MCF 10A (cell line): ENCODE measurements at regions of chr18 and their contacts with region 1.

Region 1: DNA sequence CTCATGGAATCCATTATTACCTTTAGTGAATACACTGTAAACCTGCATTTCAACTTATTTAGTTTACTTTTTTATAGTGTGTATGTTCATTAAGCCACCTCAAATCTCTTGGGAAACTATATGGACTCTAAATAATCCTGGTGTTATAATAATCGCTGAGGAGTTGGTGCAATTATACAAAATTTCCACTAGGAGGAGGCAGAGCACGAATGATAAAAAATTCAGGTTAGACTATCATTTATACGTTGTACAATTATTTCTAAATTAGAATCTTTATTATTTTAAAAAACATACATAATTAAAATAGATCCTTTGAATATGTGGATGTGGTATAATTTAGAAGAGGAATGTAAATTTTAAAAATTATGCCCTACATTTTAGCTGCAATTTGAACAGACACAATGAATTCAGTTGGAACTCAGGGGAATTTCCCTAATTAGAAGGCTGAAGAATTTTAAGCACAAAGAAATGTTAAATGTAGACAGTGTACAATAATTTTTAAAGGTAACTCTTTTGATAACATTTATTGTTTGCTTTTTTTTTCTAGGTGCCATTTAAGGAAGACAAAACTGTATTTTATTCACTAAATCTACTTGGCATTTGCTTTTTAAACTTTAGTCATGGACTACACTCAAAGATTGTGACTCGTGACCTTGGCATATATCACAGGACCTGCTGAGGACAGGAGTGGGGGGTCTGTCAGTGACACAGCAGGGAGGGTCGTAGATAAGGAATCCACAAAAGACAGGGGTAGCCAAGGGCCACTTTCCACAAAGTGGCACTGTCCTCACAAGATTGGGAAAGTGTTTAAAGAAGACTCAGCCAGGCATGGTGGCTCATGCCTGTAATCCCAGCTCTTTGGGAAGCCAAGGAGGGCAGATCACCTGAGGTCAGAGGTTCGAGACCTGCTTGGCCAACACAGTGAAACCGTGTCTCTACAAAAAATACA is 45.5 kb downstream of the RAB12 start:
- DNase-seq: peak; percentile 40
- H3K4me3 Mint-ChIP-seq: no peak overlapping the region
- H3K27ac Mint-ChIP-seq: no peak overlapping the region
- H3K4me1 Mint-ChIP-seq: peaks cover 10% of the 10 kb centered on the region
- H3K27me3 Mint-ChIP-seq: peaks cover 14% of the 10 kb centered on the region
- CTCF ChIP-seq: peak; percentile 71

Region 2: GRCh38 chr18:8643326-8643878 is 11.4 kb before region 1 on chr18:
- CTCF ChIA-PET with region 1: interaction called, 14 read pairs
- POLR2A ChIA-PET with region 1: interaction called, 3 read pairs
- intact Hi-C with region 1: no loop called
- DNase-seq: no peak
- H3K4me3 Mint-ChIP-seq: no peak overlapping the region
- H3K27ac Mint-ChIP-seq: no peak overlapping the region
- H3K4me1 Mint-ChIP-seq: no peaks in the 10 kb centered on the region
- H3K27me3 Mint-ChIP-seq: no peaks in the 10 kb centered on the region
- CTCF ChIP-seq: no peak

Region 3: DNA sequence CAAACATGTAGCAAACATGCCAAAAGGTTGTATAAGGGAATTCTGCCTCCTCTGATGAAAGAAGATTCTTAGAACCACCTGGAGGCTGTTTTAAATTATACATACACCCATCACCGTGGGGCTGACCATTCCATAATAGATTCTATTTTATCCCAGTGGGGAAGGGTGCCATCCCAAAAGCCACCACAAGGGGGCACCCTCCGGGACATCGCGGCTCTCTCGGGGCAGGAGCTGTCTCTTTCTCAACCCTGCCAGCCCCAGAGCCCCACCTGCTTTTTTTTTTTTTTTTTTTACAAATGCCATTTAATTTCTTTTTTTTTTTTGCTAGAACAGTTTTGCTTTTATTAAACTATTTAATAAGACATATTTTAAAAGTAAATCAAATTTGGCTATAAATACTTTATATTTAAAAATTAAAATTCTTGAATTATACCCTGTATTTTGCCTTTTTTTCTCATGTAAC is 42.0 kb after region 1 on chr18:
- CTCF ChIA-PET with region 1: interaction called, 10 read pairs
- POLR2A ChIA-PET with region 1: interaction called, 4 read pairs
- intact Hi-C with region 1: loop called (anchors 1 kb)
- DNase-seq: peak; percentile 63
- H3K4me3 Mint-ChIP-seq: no peak overlapping the region
- H3K27ac Mint-ChIP-seq: no peak overlapping the region
- H3K4me1 Mint-ChIP-seq: peaks cover 4% of the 10 kb centered on the region
- H3K27me3 Mint-ChIP-seq: no peaks in the 10 kb centered on the region
- CTCF ChIP-seq: peak; percentile 61

Region 4: DNA sequence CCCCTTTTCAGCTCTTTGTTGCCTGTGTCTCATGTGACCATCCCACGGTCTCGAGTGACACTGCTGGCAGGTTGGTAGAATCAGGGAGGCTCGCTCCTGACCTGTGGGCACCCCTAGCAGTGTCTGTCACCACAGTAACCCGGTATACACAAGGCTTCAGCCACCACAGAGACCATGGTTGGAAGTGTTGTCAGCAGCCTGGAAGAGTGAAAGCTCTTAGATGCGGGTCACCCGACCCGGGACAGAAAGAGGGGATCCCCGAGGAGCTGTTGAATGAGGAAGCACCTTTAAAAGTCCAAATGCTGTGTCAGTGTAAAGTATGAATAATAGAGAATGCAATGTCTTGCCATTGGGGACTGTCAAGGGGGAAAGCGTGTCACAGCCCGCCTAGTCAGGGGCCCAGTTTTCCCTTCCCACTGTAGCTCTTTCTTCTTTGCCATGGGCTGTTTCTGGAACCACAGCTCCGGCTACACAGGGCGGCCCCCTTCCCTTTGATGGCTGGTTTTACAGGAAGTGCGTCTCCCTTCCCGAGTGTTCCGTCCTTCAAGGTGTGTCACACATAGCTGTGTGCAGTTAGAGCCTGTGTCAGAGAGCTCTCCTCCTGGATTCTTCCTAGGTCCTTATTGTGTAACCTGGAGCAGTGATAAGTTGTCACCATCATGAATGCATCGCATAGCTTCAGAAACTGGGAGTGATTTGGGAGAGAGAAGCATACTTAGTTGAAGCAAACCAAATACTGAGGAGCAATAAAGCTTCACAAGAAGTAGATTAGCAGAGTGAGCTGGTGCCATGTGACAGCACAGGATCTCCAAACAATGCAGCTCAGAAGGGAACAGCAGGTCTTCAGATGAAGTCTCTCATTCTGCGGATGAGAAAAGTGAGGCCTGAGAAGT is 131.9 kb after region 1 on chr18:
- CTCF ChIA-PET with region 1: no interaction called
- POLR2A ChIA-PET with region 1: no interaction called
- intact Hi-C with region 1: no loop called
- DNase-seq: no peak
- H3K4me3 Mint-ChIP-seq: no peak overlapping the region
- H3K27ac Mint-ChIP-seq: no peak overlapping the region
- H3K4me1 Mint-ChIP-seq: no peaks in the 10 kb centered on the region
- H3K27me3 Mint-ChIP-seq: no peaks in the 10 kb centered on the region
- CTCF ChIP-seq: no peak